Lower leg skin (tissue), 4 donors: ENCODE measurements at regions of chr7 and their contacts with region 1.

Region 1: DNA sequence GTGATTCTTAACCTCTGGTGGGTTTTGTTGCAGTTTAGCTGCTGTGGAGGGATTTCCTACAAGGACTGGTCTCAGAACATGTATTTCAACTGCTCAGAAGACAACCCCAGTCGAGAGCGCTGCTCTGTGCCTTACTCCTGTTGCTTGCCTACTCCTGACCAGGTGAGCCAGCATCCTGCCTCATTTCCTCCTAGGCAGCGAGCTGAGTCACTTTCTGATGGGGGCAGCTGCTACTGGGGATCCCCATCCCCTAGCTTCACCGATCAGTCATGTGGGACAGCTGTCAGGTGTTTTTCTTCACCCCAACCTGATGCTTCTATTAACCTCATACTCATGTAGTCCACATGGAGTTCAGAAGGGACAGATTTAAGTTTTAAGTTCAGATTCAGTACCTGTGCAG is 21.7 kb upstream of the SMO start:
- DNase-seq: no peak
- H3K4me3 ChIP-seq: no peak overlapping the region
- CTCF ChIP-seq: no peak
- POLR2A ChIP-seq: no peak

Region 2: DNA sequence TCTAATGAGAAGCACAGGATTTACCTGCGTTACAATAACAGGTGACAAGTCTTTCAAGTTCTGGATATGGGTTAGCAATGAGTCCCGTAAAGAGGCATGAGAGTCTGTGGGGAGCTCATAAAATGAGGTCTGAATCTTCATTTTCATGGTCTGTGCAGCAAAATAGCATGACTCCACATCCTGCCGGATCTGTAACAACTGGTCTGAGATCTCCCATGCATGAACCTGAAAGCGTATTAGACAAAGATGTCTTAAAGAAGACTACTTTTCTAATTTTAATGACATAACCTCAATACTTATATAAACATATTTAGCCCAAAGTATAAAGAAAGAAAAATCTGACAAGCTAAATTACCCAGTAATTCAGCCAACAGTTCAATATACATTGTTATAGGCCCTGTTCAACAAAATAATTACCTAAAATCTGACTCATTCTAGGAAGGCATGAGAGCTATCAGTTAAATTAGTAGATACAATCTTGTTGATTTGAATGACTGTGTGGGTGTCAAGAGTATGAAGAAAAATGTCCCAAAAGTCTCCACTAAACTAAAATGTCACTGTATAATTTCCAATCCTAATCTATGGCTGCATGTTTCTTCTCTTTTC is 148.7 kb before region 1 on chr7:
- intact Hi-C with region 1: no loop called
- DNase-seq: no peak
- H3K4me3 ChIP-seq: no peak overlapping the region
- CTCF ChIP-seq: no peak
- POLR2A ChIP-seq: no peak

Region 3: DNA sequence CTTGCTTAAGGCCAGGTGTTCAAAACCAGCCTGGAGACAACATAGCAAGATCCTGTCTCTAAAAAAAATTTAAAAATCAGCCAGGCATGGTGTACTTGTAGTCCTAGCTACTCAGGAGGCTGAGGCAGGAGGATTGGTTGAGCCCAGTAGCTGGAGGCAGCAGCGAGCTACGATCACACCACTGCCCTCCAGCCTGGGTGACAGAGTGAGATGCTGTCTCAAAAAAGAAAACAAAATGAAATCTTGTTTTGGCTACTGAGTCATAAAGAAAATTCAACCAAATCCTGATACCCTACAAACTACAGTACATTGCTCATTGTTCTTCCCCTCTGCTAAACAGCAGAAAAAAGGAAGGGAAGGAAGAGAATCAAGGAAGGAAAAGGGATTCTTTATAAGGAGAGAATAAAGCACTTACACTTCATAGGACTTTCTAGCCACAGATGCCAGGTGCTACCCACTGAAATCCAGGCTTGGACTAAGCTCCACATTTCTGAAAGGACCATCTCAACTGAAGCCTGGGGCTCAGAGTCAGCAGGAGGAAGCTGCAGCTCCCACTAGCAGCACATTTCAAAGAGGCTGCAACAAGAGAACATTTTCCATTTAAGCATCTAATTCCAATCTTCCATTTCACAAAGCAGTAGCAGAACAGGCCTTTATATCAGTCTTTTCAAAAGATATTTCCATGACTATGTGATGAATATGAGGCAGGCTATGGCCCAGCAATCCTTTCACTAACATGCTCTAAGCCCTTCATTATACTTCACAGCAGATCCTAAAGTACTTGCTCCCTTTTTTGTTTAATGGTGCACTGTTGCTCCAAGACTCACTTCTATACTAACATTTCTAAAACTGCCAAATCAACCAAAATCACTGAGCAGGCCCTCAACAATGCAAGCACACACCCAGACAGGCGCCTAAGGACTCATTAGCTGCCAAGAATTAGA is 125.3 kb before region 1 on chr7:
- intact Hi-C with region 1: no loop called
- DNase-seq: no peak
- H3K4me3 ChIP-seq: no peak overlapping the region
- CTCF ChIP-seq: no peak
- POLR2A ChIP-seq: no peak

Region 4: GRCh38 chr7:129210256-129210988 is 43.7 kb after region 1 on chr7:
- intact Hi-C with region 1: loop called (anchors 2 kb)
- DNase-seq: peak; percentile 55 to 95
- H3K4me3 ChIP-seq: no peak overlapping the region
- CTCF ChIP-seq: no peak
- POLR2A ChIP-seq: no peak